ENCODE measurements at regions of chr12 and their contacts with region 1.

Region 1: GRCh38 chr12:120528861-120529525 is at the start of gene COQ5:
- DNase-seq: peak; percentile 83 to 89
- ATAC-seq: peak; percentile 92 to 96
- H3K4me3 ChIP-seq: peak within 1 kb of the TSS; percentile 72 to 93 (median 87)
- H3K27ac ChIP-seq: peak within 1 kb of the TSS; percentile 89 to 97 (median 96)
- H3K4me1 ChIP-seq: peaks cover 5 to 9% of the 10 kb centered on the region in 2 donors
- H3K27me3 ChIP-seq: no peaks in the 10 kb centered on the region
- CTCF ChIP-seq: peak in 1 of 5 experiments; percentile 11
- POLR2A ChIP-seq: peak; percentile 27 to 47
- total RNA-seq, gene COQ5: 34.5 to 47.3 (median 39.2) TPM

Region 2: GRCh38 chr12:120445911-120446843 is 82.8 kb before region 1 on chr12 and contains the starts of genes GATC and TRIAP1:
- in situ Hi-C with region 1: no loop called
- intact Hi-C with region 1: no loop called
- DNase-seq: peak; percentile 57 to 75
- ATAC-seq: peak; percentile 96 to 97
- H3K4me3 ChIP-seq: peak within 1 kb of the TSS; percentile 85 to 96 (median 94)
- H3K27ac ChIP-seq: peak within 1 kb of the TSS; percentile 82 to 96 (median 88)
- H3K4me1 ChIP-seq: peaks cover 19 to 20% of the 10 kb centered on the region in 2 donors
- H3K27me3 ChIP-seq: no peaks in the 10 kb centered on the region
- CTCF ChIP-seq: peak in 1 of 5 experiments; percentile 39
- POLR2A ChIP-seq: peak; percentile 50 to 73
- total RNA-seq, gene GATC: 14.5 to 20.7 (median 18.4) TPM
- total RNA-seq, gene TRIAP1: 14.4 to 33.7 (median 28.0) TPM

Region 3: DNA sequence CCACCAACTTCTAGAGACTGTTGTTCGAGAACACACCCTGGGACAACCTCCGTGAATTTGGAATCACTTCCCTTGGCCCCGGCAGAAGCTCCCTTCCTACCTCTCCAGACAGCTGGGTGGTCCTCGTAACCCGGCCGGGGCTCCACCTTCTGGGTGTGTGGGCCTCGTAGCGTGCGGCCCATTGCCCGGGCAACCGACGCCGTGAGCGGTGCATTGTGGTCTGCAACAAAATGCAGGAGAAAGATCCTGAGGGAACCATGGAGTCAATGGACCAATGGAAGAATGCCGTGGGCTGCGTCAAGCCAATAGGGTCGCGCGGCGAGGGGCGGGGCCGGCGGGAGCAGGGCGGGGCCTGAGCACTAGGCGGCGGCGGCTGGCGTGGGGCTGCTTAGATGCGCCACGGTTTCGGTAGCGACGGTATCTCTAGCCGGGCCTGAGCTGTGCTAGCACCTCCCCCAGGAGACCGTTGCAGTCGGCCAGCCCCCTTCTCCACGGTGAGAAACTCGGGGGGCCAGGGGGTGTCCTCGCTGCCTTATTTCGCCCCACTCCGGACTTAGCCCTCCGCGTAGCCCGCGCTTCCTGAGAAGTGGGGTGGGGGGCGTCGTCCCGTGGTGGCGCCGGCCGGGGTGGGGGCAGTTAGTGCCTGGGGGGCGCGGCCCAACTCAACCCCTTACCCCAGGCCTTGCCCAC is 33.1 kb before region 1 on chr12 and contains the start of gene DYNLL1:
- in situ Hi-C with region 1: no loop called
- intact Hi-C with region 1: loop called (anchors 2 kb)
- DNase-seq: peak; percentile 92 to 96
- ATAC-seq: peak; percentile 98
- H3K4me3 ChIP-seq: peak within 1 kb of the TSS; percentile 66 to 100 (median 86)
- H3K27ac ChIP-seq: peak within 1 kb of the TSS; percentile 84 to 92 (median 85)
- H3K4me1 ChIP-seq: peaks cover 25 to 28% of the 10 kb centered on the region in 2 donors
- H3K27me3 ChIP-seq: no peaks in the 10 kb centered on the region
- CTCF ChIP-seq: peak in 1 of 5 experiments; percentile 25
- POLR2A ChIP-seq: peak; percentile 79 to 89
- total RNA-seq, gene DYNLL1: 16.7 to 45.0 (median 32.6) TPM

Measured in gastrocnemius medialis (tissue), 4 donors.